ENCODE measurements at regions of chr14 and their contacts with region 1.

Region 1: GRCh38 chr14:98984719-98985041 is 287.3 kb downstream of the BCL11B start:
- DNase-seq: peak; percentile 81 to 87 (median 87)
- H3K4me3 ChIP-seq: peak overlapping the region in 1 of 2 donors; percentile 16
- H3K4me3 Mint-ChIP-seq: peak overlapping the region; percentile 42 to 93 (median 81)
- H3K27ac ChIP-seq: peak overlapping the region; percentile 47
- H3K27ac Mint-ChIP-seq: peak overlapping the region; percentile 92 to 99 (median 97)
- H3K4me1 ChIP-seq: peaks cover 37% of the 10 kb centered on the region
- H3K4me1 Mint-ChIP-seq: peaks cover 32 to 69% (median 53%) of the 10 kb centered on the region in 4 donors
- H3K27me3 ChIP-seq: no peaks in the 10 kb centered on the region
- H3K27me3 Mint-ChIP-seq: no peaks in the 10 kb centered on the region

Region 2: GRCh38 chr14:98931911-98932310 is 52.8 kb before region 1 on chr14:
- CTCF ChIA-PET with region 1: interaction called, 7 read pairs
- POLR2A ChIA-PET with region 1: interaction called, 11 read pairs
- intact Hi-C with region 1: loop called (anchors 1 kb)
- DNase-seq: peak; percentile 82 to 85 (median 84)
- H3K4me3 ChIP-seq: peak overlapping the region in 1 of 2 donors; percentile 41
- H3K4me3 Mint-ChIP-seq: peak overlapping the region; percentile 68 to 91 (median 83)
- H3K27ac ChIP-seq: peak overlapping the region; percentile 16
- H3K27ac Mint-ChIP-seq: peak overlapping the region; percentile 79 to 97 (median 91)
- H3K4me1 ChIP-seq: peaks cover 66% of the 10 kb centered on the region
- H3K4me1 Mint-ChIP-seq: peaks cover 62 to 91% (median 78%) of the 10 kb centered on the region in 4 donors
- H3K27me3 ChIP-seq: no peaks in the 10 kb centered on the region
- H3K27me3 Mint-ChIP-seq: no peaks in the 10 kb centered on the region

Region 3: DNA sequence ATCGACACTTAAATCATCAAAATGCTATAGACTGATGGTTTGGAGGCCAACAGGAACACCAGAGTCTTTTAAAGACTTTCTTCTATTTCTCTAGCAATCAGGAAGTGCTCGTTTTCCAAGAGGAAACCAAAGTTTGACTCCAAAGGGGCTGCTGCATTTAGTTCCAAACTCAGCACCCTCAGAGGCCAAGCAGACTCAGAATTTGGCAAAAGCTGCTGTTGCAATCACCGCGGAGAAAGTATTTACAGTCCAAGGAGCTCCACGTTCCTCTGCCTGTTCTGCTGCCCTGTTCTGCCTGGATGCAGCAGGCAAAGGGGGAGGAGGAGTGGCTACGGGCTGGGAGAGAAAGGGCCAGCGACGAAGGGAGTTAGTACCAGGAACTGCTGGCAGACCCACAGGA is 37.7 kb before region 1 on chr14:
- CTCF ChIA-PET with region 1: no interaction called
- POLR2A ChIA-PET with region 1: no interaction called
- intact Hi-C with region 1: no loop called
- DNase-seq: no peak
- H3K4me3 ChIP-seq: no peak overlapping the region
- H3K4me3 Mint-ChIP-seq: no peak overlapping the region
- H3K27ac ChIP-seq: no peak overlapping the region
- H3K27ac Mint-ChIP-seq: no peak overlapping the region
- H3K4me1 ChIP-seq: no peaks in the 10 kb centered on the region
- H3K4me1 Mint-ChIP-seq: peaks cover 2 to 24% (median 14%) of the 10 kb centered on the region in 4 donors
- H3K27me3 ChIP-seq: no peaks in the 10 kb centered on the region
- H3K27me3 Mint-ChIP-seq: no peaks in the 10 kb centered on the region